BJ (cell line): ENCODE measurements at regions of chr17 and their contacts with region 1.

Region 1: DNA sequence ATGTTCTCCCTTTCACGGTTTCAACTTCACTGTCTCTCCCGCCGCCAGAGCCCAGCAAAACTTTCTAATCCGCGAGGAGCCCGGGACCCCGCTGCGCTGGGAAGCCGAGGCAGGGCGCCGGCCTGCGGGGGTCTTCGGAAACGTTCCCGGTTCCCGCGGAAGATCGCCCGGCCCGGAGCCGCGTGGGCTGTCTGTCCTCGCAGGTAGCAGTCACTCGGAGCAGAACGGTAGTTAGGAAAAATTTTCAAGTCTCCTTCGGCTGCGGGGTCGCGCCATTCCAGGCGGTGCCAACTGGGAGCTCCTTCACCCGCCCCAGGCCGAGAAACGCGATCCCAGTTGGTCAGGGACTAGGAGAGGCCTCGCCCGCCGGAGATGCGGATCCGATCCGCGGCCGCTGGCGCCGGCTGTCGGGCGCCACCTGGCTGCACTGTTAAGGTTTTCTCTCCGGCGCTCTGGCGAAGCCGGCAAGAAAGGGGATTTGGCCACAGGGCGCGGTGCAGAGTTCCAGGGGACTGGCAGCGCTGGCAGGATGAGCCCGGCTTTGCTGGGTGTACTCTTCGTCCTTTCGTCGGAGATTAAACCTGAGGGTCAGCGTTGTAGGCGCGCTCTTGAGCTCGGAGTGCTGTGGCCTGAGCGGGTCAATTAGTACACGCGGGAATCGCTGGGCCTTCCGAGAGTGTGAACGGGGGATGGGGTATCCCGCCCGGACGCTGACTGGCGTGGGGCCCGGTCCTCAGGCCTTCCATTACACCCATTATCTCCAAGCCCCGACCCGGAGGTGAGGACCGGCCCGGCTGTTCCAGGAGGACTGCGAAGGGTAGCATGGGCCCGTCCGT is 135.4 kb downstream of the KCNJ12 start:
- DNase-seq: peak; percentile 7
- H3K4me3 ChIP-seq: peak overlapping the region; percentile 41
- H3K27me3 ChIP-seq: peaks cover 4% of the 10 kb centered on the region
- CTCF ChIP-seq: peak; percentile 87

Region 2: DNA sequence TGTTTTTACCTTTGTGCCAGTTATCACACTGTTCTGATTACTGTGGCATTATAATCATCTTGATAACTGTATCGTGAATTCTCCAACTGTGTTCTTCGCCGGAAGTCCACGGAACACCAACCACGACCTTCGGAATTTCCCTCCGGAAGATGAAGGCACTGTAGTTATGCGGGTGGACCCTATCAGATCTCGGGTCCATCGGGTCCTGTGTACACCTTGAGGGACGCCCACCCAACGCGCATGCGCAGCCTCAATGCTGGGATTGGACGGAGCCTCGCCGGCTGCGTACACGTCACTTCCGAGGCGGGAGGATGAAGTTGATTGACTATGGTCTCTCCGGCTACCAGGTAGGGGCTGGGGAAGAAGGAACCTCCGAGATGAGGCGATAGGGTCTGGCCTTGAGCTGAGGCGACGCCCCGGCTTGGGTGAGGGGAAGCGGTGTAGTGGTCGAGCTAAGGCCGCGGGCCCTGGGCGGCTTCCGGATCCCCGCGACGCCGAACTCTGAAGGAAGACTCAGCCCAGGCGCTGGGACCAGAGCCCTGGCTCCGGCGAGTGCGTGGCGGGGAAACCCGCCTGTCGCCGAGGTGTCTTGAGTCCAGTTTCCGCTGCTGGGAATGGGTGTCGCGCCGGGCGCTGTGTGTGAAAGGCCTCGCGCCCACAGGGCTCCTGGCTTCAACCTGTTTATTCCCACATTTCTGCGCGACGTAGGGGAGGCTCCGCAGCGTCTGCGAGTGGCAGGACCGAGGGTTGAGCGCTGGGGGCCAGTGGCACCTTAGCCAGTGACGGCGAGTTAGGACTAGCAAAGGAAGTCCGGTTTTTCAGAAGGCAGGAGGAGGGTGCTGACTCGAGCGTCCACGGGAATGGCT is 384.7 kb before region 1 on chr17 and contains the start of gene DHRS7B:
- CTCF ChIA-PET with region 1: interaction called, 13 read pairs
- POLR2A ChIA-PET with region 1: no interaction called
- DNase-seq: peak; percentile 51
- H3K4me3 ChIP-seq: peak within 1 kb of the TSS; percentile 68
- H3K27me3 ChIP-seq: no peaks in the 10 kb centered on the region
- CTCF ChIP-seq: 0 out of 2 replicates have a peak, but pooled peaks have one; percentile 14
- polyA plus RNA-seq, gene DHRS7B: 33.8 and 47.0 TPM in 2 replicates

Region 3: GRCh38 chr17:21457051-21458026 is 54.2 kb before region 1 on chr17:
- CTCF ChIA-PET with region 1: interaction called, 112 read pairs
- POLR2A ChIA-PET with region 1: no interaction called
- DNase-seq: peak; percentile 41
- H3K4me3 ChIP-seq: no peak overlapping the region
- H3K27me3 ChIP-seq: peaks cover 13% of the 10 kb centered on the region
- CTCF ChIP-seq: peak; percentile 92

Region 4: DNA sequence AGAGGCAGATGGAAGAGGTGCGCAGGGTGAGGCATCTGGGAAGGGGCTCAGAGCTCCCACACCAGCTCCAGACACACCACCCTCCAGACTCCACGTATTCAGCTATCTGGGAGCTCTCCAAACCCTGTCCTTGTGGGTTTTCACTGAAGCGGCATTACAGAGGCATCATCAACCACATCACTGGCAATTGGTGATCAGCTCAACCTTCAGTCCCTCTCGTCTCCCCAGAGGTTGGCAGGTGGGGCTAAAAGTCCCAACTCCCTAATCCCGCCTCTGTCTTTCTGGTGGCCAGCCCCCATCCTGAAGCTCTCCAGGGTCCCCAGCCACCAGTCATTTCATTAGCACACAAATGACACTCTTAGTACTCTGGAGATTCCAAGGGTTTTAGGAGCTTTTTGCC is 11.5 kb before region 1 on chr17:
- CTCF ChIA-PET with region 1: interaction called, 27 read pairs
- POLR2A ChIA-PET with region 1: no interaction called
- DNase-seq: no peak
- H3K4me3 ChIP-seq: no peak overlapping the region
- H3K27me3 ChIP-seq: peaks cover 11% of the 10 kb centered on the region
- CTCF ChIP-seq: no peak

Region 5: DNA sequence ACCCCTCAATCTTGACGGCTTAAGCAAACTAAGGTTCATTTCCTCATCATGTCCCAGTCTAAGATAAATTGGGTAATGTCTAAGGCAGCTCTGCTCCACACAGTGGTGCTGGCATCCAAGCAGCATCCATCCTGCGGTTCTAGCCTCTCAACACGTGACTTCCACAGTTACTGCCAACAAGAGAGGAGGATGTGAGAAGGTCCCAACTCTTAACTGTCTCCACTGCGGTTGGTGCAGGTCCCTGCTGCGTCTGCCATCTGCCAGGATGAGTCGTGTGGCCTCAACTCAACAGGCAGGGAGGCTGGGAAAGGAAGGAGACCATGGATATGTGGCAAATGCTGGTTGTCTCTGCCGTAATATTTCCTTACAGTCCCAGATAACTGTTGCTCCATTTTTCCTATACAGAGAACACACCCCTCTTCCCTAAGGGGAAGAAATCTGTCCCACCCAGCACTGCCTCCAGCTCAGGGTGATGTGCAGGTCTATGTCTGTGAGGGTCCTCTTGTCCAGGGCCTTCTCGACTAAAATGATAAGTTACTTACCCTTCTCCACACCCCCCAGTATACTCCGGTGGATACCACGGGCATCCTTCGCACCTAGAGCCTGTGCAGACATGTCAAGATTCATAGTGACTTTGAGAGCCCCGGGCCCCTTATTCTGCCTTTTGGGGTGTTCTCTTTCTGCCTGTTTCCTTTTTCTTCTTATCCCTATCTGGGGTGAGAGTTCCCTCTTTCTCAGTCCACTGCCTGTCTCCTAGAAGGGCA is 245.5 kb after region 1 on chr17:
- CTCF ChIA-PET with region 1: no interaction called
- POLR2A ChIA-PET with region 1: no interaction called
- DNase-seq: no peak
- H3K4me3 ChIP-seq: no peak overlapping the region
- H3K27me3 ChIP-seq: no peaks in the 10 kb centered on the region
- CTCF ChIP-seq: no peak

Region 6: GRCh38 chr17:22454070-22454999 is 942.8 kb after region 1 on chr17:
- CTCF ChIA-PET with region 1: no interaction called
- POLR2A ChIA-PET with region 1: no interaction called
- DNase-seq: no peak
- H3K4me3 ChIP-seq: no peak overlapping the region
- H3K27me3 ChIP-seq: no peaks in the 10 kb centered on the region
- CTCF ChIP-seq: no peak